CD4-positive, alpha-beta T cell (primary cell): ENCODE measurements at regions of chr1 and their contacts with region 1.

Region 1: DNA sequence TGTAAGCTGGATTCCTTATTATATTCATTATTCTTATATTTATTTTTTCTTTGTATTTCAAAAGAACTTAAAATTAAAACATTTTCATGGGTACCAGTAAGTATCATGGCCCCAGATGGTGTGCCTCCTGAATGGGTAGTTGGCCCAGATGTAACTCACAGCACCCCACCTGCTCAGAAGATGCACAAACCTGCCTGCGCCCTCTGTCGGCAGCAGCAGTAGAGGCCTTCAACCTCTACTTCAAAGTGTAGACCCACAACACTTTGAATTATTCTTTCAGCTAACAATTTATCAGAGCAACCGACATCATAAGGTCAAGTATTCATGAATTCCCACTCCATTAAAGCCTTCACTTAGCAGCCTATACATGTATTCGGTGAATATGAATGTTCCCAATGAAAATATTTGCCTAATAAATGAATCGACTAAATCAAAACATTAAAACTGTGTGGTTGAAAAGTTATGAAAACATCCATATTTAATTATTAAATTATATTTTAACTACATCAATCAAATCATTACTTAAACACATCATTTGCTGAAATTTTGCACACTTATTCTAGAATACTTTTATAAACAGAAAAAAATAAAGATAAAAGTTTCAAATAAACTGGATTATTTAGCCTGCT is 25.4 kb downstream of the PIGM start:
- DNase-seq: peak; percentile 59 to 87 (median 68)
- ATAC-seq: peak; percentile 93
- H3K4me3 ChIP-seq: no peak overlapping the region
- H3K4me3 Mint-ChIP-seq: no peak overlapping the region
- H3K27ac ChIP-seq: no peak overlapping the region
- H3K27ac Mint-ChIP-seq: no peak overlapping the region
- H3K4me1 ChIP-seq: no peaks in the 10 kb centered on the region
- H3K4me1 Mint-ChIP-seq: no peaks in the 10 kb centered on the region
- H3K27me3 ChIP-seq: peaks cover 3 to 4% of the 10 kb centered on the region in 2 experiments
- H3K27me3 Mint-ChIP-seq: peaks cover 9% of the 10 kb centered on the region
- CTCF ChIP-seq: peak; percentile 92

Region 2: GRCh38 chr1:159161001-159161718 is 845.3 kb before region 1 on chr1:
- CTCF ChIA-PET with region 1: no interaction called
- POLR2A ChIA-PET with region 1: no interaction called
- intact Hi-C with region 1: loop called (anchors 2 to 10 kb)
- DNase-seq: peak; percentile 30 to 73 (median 45)
- ATAC-seq: peak; percentile 79
- H3K4me3 ChIP-seq: no peak overlapping the region
- H3K4me3 Mint-ChIP-seq: no peak overlapping the region
- H3K27ac ChIP-seq: no peak overlapping the region
- H3K27ac Mint-ChIP-seq: no peak overlapping the region
- H3K4me1 ChIP-seq: no peaks in the 10 kb centered on the region
- H3K4me1 Mint-ChIP-seq: no peaks in the 10 kb centered on the region
- H3K27me3 ChIP-seq: peaks cover 0 to 38% of the 10 kb centered on the region in 2 experiments
- H3K27me3 Mint-ChIP-seq: peaks cover 75% of the 10 kb centered on the region
- CTCF ChIP-seq: peak; percentile 81

Region 3: GRCh38 chr1:159798893-159799292 is 207.5 kb before region 1 on chr1:
- CTCF ChIA-PET with region 1: interaction called, 6 read pairs
- POLR2A ChIA-PET with region 1: no interaction called
- intact Hi-C with region 1: loop called (anchors 2 kb)
- DNase-seq: peak; percentile 11 to 77 (median 29)
- ATAC-seq: peak; percentile 59
- H3K4me3 ChIP-seq: no peak overlapping the region
- H3K4me3 Mint-ChIP-seq: no peak overlapping the region
- H3K27ac ChIP-seq: no peak overlapping the region
- H3K27ac Mint-ChIP-seq: no peak overlapping the region
- H3K4me1 ChIP-seq: peaks cover 32% of the 10 kb centered on the region
- H3K4me1 Mint-ChIP-seq: peaks cover 16% of the 10 kb centered on the region
- H3K27me3 ChIP-seq: peaks cover 0 to 3% of the 10 kb centered on the region in 2 experiments
- H3K27me3 Mint-ChIP-seq: peaks cover 3% of the 10 kb centered on the region
- CTCF ChIP-seq: peak; percentile 73

Region 4: GRCh38 chr1:159945483-159946241 is 60.8 kb before region 1 on chr1 and contains the start of gene IGSF9:
- CTCF ChIA-PET with region 1: interaction called, 12 read pairs
- POLR2A ChIA-PET with region 1: interaction called, 4 read pairs
- intact Hi-C with region 1: no loop called
- DNase-seq: peak; percentile 53 to 89 (median 72)
- ATAC-seq: peak; percentile 97
- H3K4me3 ChIP-seq: peak within 1 kb of the TSS; percentile 46
- H3K4me3 Mint-ChIP-seq: peak within 1 kb of the TSS; percentile 62
- H3K27ac ChIP-seq: no peak within 1 kb of the TSS
- H3K27ac Mint-ChIP-seq: no peak within 1 kb of the TSS
- H3K4me1 ChIP-seq: peaks cover 15% of the 10 kb centered on the region
- H3K4me1 Mint-ChIP-seq: peaks cover 10% of the 10 kb centered on the region
- H3K27me3 ChIP-seq: peaks cover 22 to 26% of the 10 kb centered on the region in 2 experiments
- H3K27me3 Mint-ChIP-seq: peaks cover 42% of the 10 kb centered on the region
- CTCF ChIP-seq: peak; percentile 63
- total RNA-seq, gene IGSF9: not detected

Region 5: DNA sequence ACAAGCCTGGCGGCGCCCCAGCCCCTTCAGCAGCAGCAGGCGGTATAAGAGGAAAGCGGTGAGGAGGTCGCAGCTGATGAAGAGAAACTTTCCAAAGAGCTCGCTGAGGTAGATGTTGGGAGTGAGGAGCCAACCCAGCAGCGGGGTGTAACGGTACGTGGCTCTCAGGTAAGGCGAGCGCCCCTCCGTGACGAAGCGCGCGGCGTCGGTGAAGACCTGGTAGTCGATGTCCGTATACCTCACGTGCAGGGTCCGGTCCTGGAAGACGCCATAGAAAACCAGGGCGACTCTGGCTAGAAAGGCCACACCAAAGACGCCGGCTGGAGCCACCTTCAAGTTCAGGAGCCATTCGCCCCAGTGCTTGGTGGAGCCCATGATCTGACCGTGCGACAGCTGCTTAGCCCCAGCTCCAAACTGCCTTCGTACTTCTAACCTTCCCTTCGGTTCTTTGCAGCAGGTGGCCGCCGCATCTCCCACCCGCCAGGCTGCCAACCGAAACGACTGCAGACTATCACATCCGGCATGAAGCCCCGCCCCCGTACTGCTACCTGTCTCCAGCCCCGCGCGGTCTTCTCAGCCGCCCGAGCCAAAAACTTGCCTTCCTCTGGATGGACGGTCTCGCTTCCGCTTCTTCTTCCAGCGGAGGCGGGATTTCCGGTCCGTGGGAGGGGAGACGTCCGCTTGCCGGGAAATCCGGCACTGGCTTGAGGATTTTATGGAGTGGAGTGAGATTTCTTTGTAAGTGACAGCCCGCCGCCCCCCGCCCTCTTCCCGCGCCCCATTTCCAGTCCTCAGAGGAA is 25.1 kb after region 1 on chr1 and contains the start of gene PIGM:
- CTCF ChIA-PET with region 1: interaction called, 24 read pairs
- POLR2A ChIA-PET with region 1: no interaction called
- intact Hi-C with region 1: no loop called
- DNase-seq: peak; percentile 82 to 98 (median 92)
- ATAC-seq: peak; percentile 98
- H3K4me3 ChIP-seq: peak within 1 kb of the TSS; percentile 89
- H3K4me3 Mint-ChIP-seq: peak within 1 kb of the TSS; percentile 98
- H3K27ac ChIP-seq: peak within 1 kb of the TSS; percentile 52 to 67
- H3K27ac Mint-ChIP-seq: peak within 1 kb of the TSS; percentile 94
- H3K4me1 ChIP-seq: peaks cover 24% of the 10 kb centered on the region
- H3K4me1 Mint-ChIP-seq: peaks cover 50% of the 10 kb centered on the region
- H3K27me3 ChIP-seq: no peaks in the 10 kb centered on the region
- H3K27me3 Mint-ChIP-seq: no peaks in the 10 kb centered on the region
- CTCF ChIP-seq: no peak
- total RNA-seq, gene PIGM: 2.1 to 2.2 TPM